Left ventricle myocardium superior (tissue), 1 donor: ENCODE measurements at regions of chr3 and their contacts with region 1.

Region 1: DNA sequence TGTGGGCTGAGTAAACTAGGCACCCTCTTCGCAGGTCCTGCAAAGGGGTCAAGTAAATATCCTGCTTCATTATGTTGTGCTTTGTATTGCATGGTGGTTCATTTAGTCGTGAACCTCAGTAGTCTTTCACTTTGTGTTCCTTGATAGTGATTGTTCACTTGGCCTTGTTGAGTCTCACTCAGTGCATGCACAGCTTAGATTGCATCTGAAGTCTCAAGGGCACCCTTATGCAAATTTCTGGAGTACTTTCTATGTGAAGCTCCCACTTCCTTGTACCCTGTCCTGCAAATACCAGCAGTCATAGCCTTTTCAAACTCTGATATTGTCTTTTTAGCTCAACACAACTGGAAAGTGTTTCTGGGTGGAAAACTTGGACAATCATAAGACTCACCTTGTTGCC is 519.2 kb downstream of the NAALADL2 start:
- DNase-seq: no peak
- ATAC-seq: no peak

Region 2: GRCh38 chr3:175343946-175344345 is 34.4 kb before region 1 on chr3:
- intact Hi-C with region 1: loop called (anchors 1 kb)
- DNase-seq: no peak
- ATAC-seq: no peak